Left cardiac atrium (tissue), 4 donors: ENCODE measurements at regions of chr17 and their contacts with region 1.

Region 1: DNA sequence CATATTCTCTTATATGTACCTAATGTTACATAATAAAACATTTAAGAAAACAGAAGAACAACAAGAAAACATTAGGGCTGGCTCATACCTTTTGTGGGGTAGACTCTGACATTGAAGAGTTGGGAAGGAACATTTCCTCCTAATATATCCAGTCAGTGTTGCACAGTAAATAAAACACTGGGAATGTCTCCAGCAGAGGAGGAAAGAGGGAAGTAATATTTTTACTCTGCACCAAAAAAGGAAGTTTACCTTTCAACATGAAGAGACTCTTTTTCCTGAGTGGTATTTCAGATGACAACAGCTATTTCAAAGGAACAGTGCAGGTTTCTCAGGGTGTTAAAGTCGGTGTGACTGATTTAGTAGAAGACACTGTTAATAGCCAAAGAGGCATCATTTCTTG is 31.9 kb downstream of the EPN2 start:
- DNase-seq: no peak
- ATAC-seq: no peak

Region 2: GRCh38 chr17:19302791-19303331 is 33.8 kb after region 1 on chr17:
- intact Hi-C with region 1: loop called in 1 of 2 experiments (anchors 2 kb)
- DNase-seq: no peak
- ATAC-seq: peak; percentile 15 to 25

Region 3: DNA sequence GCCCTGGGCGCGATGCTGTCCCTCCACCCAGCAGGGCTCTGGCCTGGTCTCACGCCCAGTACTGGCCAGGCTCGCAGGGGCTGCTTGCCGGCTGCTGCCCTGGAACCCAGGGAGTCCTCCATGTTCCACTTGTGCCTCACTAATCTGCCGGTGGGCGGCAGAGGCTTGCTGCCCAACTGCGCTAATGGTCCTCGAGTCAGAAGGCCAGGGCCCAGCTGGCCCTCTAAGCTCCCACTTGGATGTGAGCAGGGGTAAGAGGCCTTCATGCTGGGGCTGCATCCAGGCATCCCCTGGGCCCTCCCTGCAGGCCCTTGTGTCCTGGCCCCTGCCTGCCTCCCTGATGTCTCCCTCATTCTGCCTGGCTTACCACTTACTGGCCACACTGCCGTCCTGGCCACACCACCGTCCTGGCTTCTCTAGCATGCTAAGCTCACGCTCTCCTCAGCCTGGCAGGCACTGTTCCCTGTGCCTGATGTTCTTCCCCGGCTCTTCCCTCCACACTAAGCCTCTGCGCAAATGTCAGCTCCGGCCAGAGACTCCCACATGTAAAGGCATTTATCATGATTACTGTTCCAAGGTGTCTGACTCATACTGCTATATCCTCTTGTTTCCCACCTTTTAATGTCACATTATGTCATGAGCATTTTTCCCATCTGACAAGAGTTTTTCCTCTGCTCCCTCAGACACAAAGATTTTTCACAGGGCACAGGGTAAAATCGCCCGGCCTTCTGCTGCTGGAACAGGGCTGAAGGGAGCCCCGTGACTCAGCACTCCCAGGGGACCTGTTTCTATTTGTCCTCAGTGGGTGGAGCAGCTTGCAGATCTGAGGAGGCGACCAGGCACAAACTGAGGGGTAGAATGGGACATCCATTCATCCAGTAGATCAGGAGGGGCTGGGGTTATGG is 77.5 kb after region 1 on chr17:
- intact Hi-C with region 1: no loop called
- DNase-seq: peak; percentile 85
- ATAC-seq: peak; percentile 51 to 79

Region 4: DNA sequence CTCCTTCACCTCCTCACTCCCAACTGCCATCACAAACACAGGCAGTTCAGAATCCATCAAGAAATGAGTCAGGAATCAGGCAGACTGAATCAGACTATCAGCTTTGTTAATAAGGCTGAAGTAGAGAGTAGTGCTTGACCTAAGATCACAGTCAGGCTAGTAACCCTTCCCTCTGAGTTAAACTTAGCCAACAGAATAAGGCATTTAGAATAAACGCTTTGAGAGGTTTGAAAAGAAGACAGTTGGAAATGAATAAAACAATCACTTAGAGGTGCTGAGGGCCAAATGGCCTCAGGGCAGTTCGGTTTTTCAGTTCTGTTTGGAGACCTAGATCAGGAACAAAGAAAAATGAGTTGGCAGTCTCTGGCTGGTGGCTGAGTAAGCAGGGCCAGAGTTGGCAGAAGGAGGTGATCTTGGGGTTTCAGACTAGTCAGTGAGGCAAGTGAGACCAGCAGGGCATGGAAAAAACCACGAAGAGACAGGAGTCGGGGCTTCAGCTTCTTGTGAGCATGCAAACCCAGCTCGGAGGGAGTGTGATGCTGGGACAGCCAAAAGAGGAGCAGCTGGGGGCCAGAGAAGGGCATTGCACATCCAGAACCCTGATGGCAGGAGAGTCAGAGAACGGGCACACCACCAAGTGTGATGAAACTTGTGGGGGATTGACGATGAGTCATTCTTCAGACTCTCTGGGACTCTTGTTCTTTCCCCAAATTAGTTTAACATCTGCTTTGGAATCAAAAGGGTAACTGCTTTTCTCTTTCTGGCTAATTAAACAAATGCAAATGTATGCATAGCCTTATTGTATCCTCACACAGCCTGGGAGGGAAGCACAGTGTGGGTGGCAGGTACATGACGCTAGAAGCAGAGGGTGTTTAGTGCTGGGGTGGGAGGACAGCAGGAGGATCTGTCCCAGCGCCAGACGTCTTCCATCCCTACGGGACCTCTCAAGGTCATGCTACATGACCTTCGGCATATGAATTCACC is 794.9 kb after region 1 on chr17:
- intact Hi-C with region 1: no loop called
- DNase-seq: peak; percentile 85
- ATAC-seq: peak; percentile 88 to 89